CD4-positive, alpha-beta memory T cell (primary cell): ENCODE measurements at regions of chr2 and their contacts with region 1.

Region 1: DNA sequence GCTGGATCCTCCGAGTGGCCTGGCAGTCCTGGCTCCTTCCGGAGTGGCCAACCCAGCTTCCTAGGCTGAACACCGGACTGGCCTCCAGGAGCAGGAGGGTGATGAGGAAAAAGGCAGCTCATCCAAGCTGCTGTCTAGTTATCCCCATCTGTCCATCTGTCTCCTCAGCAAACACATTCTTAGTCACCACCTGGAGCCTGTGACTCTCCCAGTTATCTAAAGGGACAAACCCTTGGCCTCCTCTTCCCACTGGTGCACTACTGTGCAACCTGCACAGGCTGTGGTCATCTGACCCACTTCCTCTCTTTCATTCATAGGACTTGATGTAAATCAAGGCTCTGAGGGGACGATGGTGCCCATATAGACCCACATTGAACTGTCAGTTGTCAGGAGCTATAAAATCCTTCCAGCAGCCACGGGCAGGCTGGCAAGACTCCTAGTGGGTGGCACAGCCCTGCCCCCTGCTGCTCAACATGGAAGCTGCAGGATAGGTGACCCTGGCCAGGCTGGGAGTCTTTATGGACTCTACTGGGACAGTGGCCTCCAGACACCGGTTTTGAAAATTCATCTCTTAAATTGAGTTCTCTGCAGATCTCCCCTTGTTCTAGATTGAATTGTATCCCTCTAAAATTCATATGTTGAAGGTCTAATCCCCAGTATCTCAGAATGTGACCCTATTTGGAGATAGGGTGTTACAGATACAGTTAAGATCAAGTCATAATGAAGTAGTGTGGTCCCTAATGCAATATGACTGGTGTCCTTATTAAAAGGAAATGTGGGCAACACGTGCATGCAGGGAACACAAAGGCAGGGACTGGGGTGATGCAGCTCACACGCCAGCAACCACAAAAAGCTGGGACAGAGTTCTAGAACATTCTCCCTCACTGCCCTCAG is 29.3 kb upstream of the DUSP2 start:
- DNase-seq: peak; percentile 78 to 83 (median 79)
- H3K4me3 ChIP-seq: no peak overlapping the region
- H3K4me3 Mint-ChIP-seq: no peak overlapping the region
- H3K27ac ChIP-seq: no peak overlapping the region
- H3K27ac Mint-ChIP-seq: peak overlapping the region in 6 of 7 donors; percentile 25 to 89 (median 70)
- H3K4me1 ChIP-seq: peaks cover 5% of the 10 kb centered on the region
- H3K4me1 Mint-ChIP-seq: peaks cover 5 to 6% (median 5%) of the 10 kb centered on the region in 4 donors
- H3K27me3 ChIP-seq: no peaks in the 10 kb centered on the region
- H3K27me3 Mint-ChIP-seq: no peaks in the 10 kb centered on the region

Region 2: DNA sequence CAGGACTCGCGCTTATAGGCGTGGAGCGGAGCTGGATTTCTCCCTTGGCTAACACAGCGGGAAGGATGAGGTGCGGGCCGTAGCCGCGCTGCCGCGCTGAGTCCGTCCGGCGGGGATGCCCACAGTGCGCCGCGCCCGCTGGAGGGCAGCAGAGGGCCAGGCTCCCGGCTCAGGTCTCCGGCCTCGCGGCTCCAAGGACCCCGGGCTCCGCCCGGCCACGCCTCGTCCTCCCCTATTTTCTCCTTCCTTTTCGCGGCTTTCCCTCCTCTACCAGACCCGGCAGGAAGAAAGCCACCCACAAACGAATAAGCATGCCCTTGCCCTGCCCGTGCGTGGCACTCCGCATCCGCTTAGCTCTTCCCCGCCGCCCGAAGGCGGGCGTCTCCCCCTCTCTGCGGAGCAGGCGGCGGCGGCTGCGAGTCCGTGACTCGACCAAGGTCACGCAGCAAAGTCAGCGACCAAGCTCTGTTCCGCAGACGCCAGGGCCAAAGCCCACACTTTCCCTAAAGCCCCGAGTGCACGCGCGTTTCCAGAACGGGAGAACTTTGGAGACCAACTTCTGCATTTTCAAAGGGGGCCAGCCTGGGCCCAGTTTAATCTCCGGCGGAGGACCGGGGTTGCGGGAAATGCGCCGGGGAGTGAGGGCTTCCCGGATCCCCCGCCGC is 828.8 kb before region 1 on chr2:
- CTCF ChIA-PET with region 1: no interaction called
- POLR2A ChIA-PET with region 1: no interaction called
- intact Hi-C with region 1: no loop called
- DNase-seq: peak in 4 of 5 donors; percentile 15 to 36 (median 30)
- H3K4me3 ChIP-seq: peak overlapping the region in 1 of 2 donors; percentile 37
- H3K4me3 Mint-ChIP-seq: peak overlapping the region; percentile 71 to 85 (median 76)
- H3K27ac ChIP-seq: no peak overlapping the region
- H3K27ac Mint-ChIP-seq: no peak overlapping the region
- H3K4me1 ChIP-seq: peaks cover 10% of the 10 kb centered on the region
- H3K4me1 Mint-ChIP-seq: peaks cover 0 to 11% (median 3%) of the 10 kb centered on the region in 4 donors
- H3K27me3 ChIP-seq: peaks cover 4% of the 10 kb centered on the region
- H3K27me3 Mint-ChIP-seq: peaks cover 30% of the 10 kb centered on the region in 2 donors

Region 3: GRCh38 chr2:96024336-96025193 is 149.9 kb before region 1 on chr2:
- CTCF ChIA-PET with region 1: interaction called, 11 read pairs
- POLR2A ChIA-PET with region 1: no interaction called
- intact Hi-C with region 1: loop called (anchors 10 kb)
- DNase-seq: no peak
- H3K4me3 ChIP-seq: no peak overlapping the region
- H3K4me3 Mint-ChIP-seq: no peak overlapping the region
- H3K27ac ChIP-seq: no peak overlapping the region
- H3K27ac Mint-ChIP-seq: no peak overlapping the region
- H3K4me1 ChIP-seq: no peaks in the 10 kb centered on the region
- H3K4me1 Mint-ChIP-seq: peaks cover 0 to 3% (median 2%) of the 10 kb centered on the region in 4 donors
- H3K27me3 ChIP-seq: no peaks in the 10 kb centered on the region
- H3K27me3 Mint-ChIP-seq: no peaks in the 10 kb centered on the region

Region 4: GRCh38 chr2:96138179-96139145 is 36.0 kb before region 1 on chr2 and contains the start of gene ASTL:
- CTCF ChIA-PET with region 1: interaction called, 648 read pairs
- POLR2A ChIA-PET with region 1: interaction called, 113 read pairs
- intact Hi-C with region 1: loop called (anchors 1 kb)
- DNase-seq: peak; percentile 60 to 74 (median 69)
- H3K4me3 ChIP-seq: no peak within 1 kb of the TSS
- H3K4me3 Mint-ChIP-seq: peak within 1 kb of the TSS in 1 of 8 donors; percentile 10
- H3K27ac ChIP-seq: no peak within 1 kb of the TSS
- H3K27ac Mint-ChIP-seq: peak within 1 kb of the TSS in 6 of 7 donors; percentile 60 to 96 (median 72)
- H3K4me1 ChIP-seq: peaks cover 17% of the 10 kb centered on the region
- H3K4me1 Mint-ChIP-seq: peaks cover 13 to 35% (median 16%) of the 10 kb centered on the region in 4 donors
- H3K27me3 ChIP-seq: no peaks in the 10 kb centered on the region
- H3K27me3 Mint-ChIP-seq: no peaks in the 10 kb centered on the region
- total RNA-seq, gene ASTL: 1.3 TPM in 1 of 2 experiments, not detected in the other

Region 5: DNA sequence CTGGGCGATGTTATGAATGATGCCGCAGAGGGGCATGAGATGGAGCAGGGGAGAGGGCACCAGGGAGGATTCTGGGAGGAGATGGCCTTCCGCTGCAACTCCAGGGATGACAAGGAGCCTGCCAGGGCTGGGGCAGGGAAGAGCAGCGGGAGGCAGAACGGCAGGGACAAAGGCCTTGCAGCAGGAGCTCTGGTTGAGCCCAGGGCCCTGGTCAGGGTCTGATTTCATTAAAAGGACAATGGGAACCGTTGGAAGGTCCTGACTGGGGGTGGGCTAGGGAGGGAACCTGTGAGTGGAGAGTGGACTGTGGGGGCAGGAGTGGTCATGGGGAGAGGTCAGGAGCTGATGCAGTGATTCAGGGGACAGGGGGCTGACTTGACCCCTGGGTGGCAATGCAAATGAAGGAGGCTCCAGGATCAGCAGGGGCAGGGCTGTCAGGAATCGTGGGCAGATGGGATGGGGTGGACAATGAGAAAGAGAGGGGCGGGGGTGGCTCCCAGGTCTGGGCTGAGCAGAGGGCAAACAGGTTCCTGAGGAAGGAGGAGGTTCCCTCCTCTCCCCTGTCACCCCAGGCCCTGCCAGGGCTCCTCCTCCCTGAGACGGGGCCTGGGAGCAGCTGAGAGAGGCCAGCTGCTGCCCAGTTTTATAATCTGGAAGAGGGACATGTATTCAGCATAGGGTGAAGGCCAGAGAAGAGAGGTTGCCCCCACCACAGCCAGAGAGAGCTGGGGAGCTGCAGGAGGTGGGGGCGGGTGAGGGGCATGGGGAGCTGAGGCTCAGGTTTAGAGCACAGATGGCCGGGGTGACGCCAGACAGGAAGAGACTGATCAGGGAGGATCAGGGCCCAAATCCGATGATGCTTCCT is 22.0 kb before region 1 on chr2:
- CTCF ChIA-PET with region 1: interaction called, 648 read pairs
- POLR2A ChIA-PET with region 1: interaction called, 92 read pairs
- intact Hi-C with region 1: no loop called
- DNase-seq: no peak
- H3K4me3 ChIP-seq: no peak overlapping the region
- H3K4me3 Mint-ChIP-seq: no peak overlapping the region
- H3K27ac ChIP-seq: no peak overlapping the region
- H3K27ac Mint-ChIP-seq: peak overlapping the region in 5 of 7 donors; percentile 22 to 100 (median 75)
- H3K4me1 ChIP-seq: peaks cover 42% of the 10 kb centered on the region
- H3K4me1 Mint-ChIP-seq: peaks cover 27 to 69% (median 51%) of the 10 kb centered on the region in 4 donors
- H3K27me3 ChIP-seq: no peaks in the 10 kb centered on the region
- H3K27me3 Mint-ChIP-seq: no peaks in the 10 kb centered on the region

Region 6: DNA sequence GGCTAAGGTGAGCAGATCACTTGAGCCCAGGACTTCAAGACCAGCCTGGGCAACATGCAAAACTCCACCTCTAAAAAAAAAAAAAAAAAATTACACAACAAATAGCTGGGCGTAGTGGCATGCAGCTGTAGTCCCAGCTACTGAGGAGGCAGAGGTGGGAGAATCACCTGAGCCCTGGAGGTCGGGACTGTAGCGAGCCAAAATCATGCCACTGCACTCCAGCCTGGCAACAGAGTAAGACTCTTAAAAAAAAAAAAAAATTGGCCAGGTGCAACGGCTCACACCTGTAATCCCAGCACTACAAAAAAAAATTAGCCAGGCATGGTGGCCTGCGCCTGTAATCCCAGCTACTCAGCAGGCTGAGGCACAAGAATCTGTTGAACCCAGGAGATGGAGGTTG is 26.8 kb after region 1 on chr2:
- CTCF ChIA-PET with region 1: interaction called, 10 read pairs
- POLR2A ChIA-PET with region 1: interaction called, 3 read pairs
- intact Hi-C with region 1: no loop called
- DNase-seq: no peak
- H3K4me3 ChIP-seq: no peak overlapping the region
- H3K4me3 Mint-ChIP-seq: peak overlapping the region in 1 of 8 donors; percentile 87
- H3K27ac ChIP-seq: no peak overlapping the region
- H3K27ac Mint-ChIP-seq: peak overlapping the region in 1 of 7 donors; percentile 17
- H3K4me1 ChIP-seq: peaks cover 68% of the 10 kb centered on the region
- H3K4me1 Mint-ChIP-seq: peaks cover 49 to 86% (median 66%) of the 10 kb centered on the region in 4 donors
- H3K27me3 ChIP-seq: no peaks in the 10 kb centered on the region
- H3K27me3 Mint-ChIP-seq: no peaks in the 10 kb centered on the region

Region 7: GRCh38 chr2:96241900-96242611 is 67.6 kb after region 1 on chr2:
- CTCF ChIA-PET with region 1: interaction called, 10 read pairs
- POLR2A ChIA-PET with region 1: no interaction called
- intact Hi-C with region 1: no loop called
- DNase-seq: peak; percentile 44 to 74 (median 52)
- H3K4me3 ChIP-seq: peak overlapping the region in 1 of 2 donors; percentile 18
- H3K4me3 Mint-ChIP-seq: peak overlapping the region; percentile 58 to 84 (median 74)
- H3K27ac ChIP-seq: peak overlapping the region; percentile 65
- H3K27ac Mint-ChIP-seq: peak overlapping the region; percentile 91 to 98 (median 96)
- H3K4me1 ChIP-seq: peaks cover 42% of the 10 kb centered on the region
- H3K4me1 Mint-ChIP-seq: peaks cover 34 to 60% (median 46%) of the 10 kb centered on the region in 4 donors
- H3K27me3 ChIP-seq: no peaks in the 10 kb centered on the region
- H3K27me3 Mint-ChIP-seq: no peaks in the 10 kb centered on the region